Heart left ventricle (tissue), 16 donors: ENCODE measurements at regions of chr11 and their contacts with region 1.

Region 1: GRCh38 chr11:125338886-125339811 is 156.9 kb downstream of the FEZ1 start:
- DNase-seq: peak in 4 of 5 donors; percentile 57 to 64 (median 60)
- ATAC-seq: peak; percentile 71 to 86 (median 84)
- H3K4me3 ChIP-seq: no peak overlapping the region
- H3K27ac ChIP-seq: peak overlapping the region; percentile 37 to 85 (median 72)
- H3K4me1 ChIP-seq: peaks cover 0 to 24% (median 2%) of the 10 kb centered on the region in 12 donors
- H3K27me3 ChIP-seq: no peaks in the 10 kb centered on the region
- CTCF ChIP-seq: no peak
- POLR2A ChIP-seq: no peak

Region 2: GRCh38 chr11:125287491-125288210 is 51.5 kb before region 1 on chr11:
- intact Hi-C with region 1: loop called in 1 of 10 experiments (anchors 10 kb)
- DNase-seq: peak in 3 of 5 donors; percentile 49 to 76 (median 62)
- ATAC-seq: peak in 3 of 4 donors; percentile 77 to 89 (median 80)
- H3K4me3 ChIP-seq: no peak overlapping the region
- H3K27ac ChIP-seq: peak overlapping the region in 8 of 12 donors; percentile 42 to 76 (median 60)
- H3K4me1 ChIP-seq: peaks cover 0 to 41% (median 8%) of the 10 kb centered on the region in 12 donors
- H3K27me3 ChIP-seq: no peaks in the 10 kb centered on the region
- CTCF ChIP-seq: no peak
- POLR2A ChIP-seq: no peak